ENCODE measurements at regions of chr2 and their contacts with region 1.

Region 1: DNA sequence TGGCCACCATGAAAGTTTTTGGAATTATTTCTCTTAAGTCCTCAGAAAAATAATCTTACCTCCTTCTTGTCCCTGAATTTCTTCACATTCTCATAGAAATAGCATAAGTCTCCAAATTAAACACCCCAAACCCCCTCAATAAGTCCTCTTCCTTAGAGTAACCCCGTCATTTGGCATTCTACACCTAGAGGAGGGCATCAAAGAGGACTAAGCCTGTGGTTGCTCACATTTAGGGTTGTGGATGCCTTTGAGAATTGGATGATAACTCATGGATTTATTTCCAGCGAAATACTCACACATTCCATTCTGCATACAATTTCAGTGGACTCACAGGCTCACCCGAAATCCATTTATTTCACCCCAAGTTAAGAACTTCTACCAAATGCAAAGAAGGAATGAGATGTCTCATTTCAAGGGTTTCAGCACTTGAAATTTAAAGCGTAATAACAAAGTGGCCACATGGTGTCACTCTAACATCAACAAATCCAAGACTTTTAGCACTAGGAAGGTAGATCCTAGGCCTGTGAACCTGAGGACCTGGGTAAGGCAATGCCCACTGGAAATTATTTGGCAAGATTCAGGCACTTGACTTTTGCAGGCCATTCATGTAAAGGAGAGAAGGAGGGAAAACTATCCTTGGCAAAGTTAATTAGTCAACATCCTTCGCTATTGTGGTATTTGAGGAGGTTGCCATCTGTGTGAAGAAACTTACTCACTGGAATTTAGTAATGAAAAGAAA is 24.6 kb downstream of the DYTN start:
- DNase-seq: peak in 7 of 9 donors; percentile 11 to 56 (median 41)
- ATAC-seq: peak; percentile 75
- H3K4me3 ChIP-seq: no peak overlapping the region
- H3K4me3 Mint-ChIP-seq: no peak overlapping the region
- H3K27ac ChIP-seq: no peak overlapping the region
- H3K27ac Mint-ChIP-seq: no peak overlapping the region
- H3K4me1 ChIP-seq: no peaks in the 10 kb centered on the region
- H3K4me1 Mint-ChIP-seq: peaks cover 0 to 4% (median 0%) of the 10 kb centered on the region in 7 donors
- H3K27me3 ChIP-seq: no peaks in the 10 kb centered on the region
- H3K27me3 Mint-ChIP-seq: peaks cover 0 to 7% (median 0%) of the 10 kb centered on the region in 5 donors

Region 2: DNA sequence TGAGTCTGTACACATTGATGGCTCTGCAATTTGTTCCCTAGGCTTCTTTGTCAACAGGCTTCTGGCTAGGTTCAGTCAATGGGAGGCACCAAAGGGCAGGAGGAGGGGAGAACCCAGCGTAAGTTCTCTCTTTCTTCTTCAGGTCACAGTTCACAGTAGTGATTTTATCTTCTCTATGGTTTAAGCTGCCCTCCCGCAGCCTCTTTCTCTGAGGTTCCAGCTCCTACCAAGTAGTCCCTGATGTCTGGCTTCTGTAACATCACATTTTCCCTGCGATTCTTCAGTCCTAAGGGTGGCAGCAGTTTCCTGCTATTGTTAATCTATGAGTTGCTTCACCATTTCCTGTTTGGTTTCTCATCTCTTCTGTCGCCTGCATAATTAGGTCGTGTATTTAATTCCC is 353.2 kb after region 1 on chr2:
- CTCF ChIA-PET with region 1: no interaction called
- POLR2A ChIA-PET with region 1: no interaction called
- intact Hi-C with region 1: loop called (anchors 2 to 5 kb)
- DNase-seq: peak in 8 of 9 donors; percentile 24 to 69 (median 52)
- ATAC-seq: peak; percentile 79
- H3K4me3 ChIP-seq: no peak overlapping the region
- H3K4me3 Mint-ChIP-seq: peak overlapping the region in 8 of 10 donors; percentile 0 to 66 (median 12)
- H3K27ac ChIP-seq: no peak overlapping the region
- H3K27ac Mint-ChIP-seq: peak overlapping the region; percentile 2 to 78 (median 56)
- H3K4me1 ChIP-seq: peaks cover 0 to 4% of the 10 kb centered on the region in 2 donors
- H3K4me1 Mint-ChIP-seq: peaks cover 11 to 14% (median 13%) of the 10 kb centered on the region in 7 donors
- H3K27me3 ChIP-seq: no peaks in the 10 kb centered on the region
- H3K27me3 Mint-ChIP-seq: peaks cover 0 to 16% (median 0%) of the 10 kb centered on the region in 5 donors

Region 3: DNA sequence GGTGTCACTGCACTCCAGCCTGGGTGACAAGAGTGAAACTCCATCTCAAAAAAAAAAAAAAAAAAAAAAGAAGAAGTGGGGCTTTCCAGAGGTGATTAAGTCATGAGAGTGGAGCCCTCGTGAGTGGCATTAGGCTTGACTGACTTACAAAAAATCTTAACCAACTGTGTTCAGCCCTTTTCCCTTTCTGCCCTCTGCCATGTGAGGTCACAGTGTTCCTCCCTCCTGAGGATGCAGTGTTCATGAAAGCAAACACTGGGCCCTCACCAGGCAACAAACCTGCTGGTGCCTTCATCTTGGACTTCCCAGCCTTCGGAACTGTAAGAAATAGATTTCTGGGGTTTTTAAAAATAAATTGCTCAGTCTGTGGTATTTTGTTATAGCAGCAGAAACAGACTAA is 968.6 kb after region 1 on chr2:
- CTCF ChIA-PET with region 1: no interaction called
- POLR2A ChIA-PET with region 1: no interaction called
- intact Hi-C with region 1: no loop called
- DNase-seq: no peak
- ATAC-seq: peak; percentile 93
- H3K4me3 ChIP-seq: no peak overlapping the region
- H3K4me3 Mint-ChIP-seq: no peak overlapping the region
- H3K27ac ChIP-seq: no peak overlapping the region
- H3K27ac Mint-ChIP-seq: no peak overlapping the region
- H3K4me1 ChIP-seq: no peaks in the 10 kb centered on the region
- H3K4me1 Mint-ChIP-seq: no peaks in the 10 kb centered on the region
- H3K27me3 ChIP-seq: no peaks in the 10 kb centered on the region
- H3K27me3 Mint-ChIP-seq: no peaks in the 10 kb centered on the region

Region 4: DNA sequence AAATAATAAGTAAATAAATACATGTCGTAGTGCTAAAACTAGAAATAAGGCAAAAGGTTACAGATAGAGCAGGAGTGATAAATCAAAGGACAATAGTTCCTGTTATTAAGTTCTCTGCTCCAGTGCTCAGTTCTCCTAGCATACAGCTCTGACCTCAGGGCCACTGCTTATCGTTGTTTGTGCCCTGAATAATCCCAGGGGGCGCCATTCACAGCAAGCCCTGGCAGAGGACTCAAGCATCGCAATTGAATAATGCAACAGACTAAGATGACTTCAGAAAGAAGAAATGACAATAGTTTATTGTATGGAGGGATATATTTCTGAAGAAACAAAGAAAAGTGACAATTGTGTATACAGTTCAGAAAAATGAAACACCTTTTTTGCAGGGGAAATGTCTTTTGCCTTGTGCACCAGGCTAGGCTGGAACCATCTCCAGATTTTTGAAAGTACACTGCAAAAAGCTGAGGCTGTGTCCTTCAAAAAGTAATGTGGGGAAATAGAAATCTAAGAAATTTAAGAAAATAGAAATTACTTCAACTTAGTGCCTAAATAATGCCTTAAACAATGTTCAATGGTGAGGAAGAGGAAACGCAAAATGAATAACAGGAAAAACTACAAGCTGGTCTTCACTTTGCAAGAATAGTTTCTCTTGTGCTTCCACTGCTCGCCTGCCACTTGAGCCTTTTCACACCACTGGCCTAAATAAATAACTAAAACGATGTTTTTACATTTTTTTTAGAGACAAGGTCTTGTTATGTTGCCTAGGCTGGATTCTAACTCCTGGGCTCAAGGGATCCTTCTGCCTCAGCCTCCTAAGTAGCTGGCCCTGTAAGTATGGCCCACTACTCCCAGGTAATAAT is 998.9 kb after region 1 on chr2:
- CTCF ChIA-PET with region 1: no interaction called
- POLR2A ChIA-PET with region 1: no interaction called
- intact Hi-C with region 1: loop called in 1 of 2 experiments (anchors 2 kb)
- DNase-seq: peak in 8 of 9 donors; percentile 21 to 58 (median 41)
- ATAC-seq: peak; percentile 82
- H3K4me3 ChIP-seq: no peak overlapping the region
- H3K4me3 Mint-ChIP-seq: peak overlapping the region in 2 of 10 donors; percentile 35 to 56
- H3K27ac ChIP-seq: no peak overlapping the region
- H3K27ac Mint-ChIP-seq: no peak overlapping the region
- H3K4me1 ChIP-seq: no peaks in the 10 kb centered on the region
- H3K4me1 Mint-ChIP-seq: peaks cover 0 to 6% (median 5%) of the 10 kb centered on the region in 7 donors
- H3K27me3 ChIP-seq: no peaks in the 10 kb centered on the region
- H3K27me3 Mint-ChIP-seq: peaks cover 0 to 5% (median 0%) of the 10 kb centered on the region in 5 donors

Region 5: DNA sequence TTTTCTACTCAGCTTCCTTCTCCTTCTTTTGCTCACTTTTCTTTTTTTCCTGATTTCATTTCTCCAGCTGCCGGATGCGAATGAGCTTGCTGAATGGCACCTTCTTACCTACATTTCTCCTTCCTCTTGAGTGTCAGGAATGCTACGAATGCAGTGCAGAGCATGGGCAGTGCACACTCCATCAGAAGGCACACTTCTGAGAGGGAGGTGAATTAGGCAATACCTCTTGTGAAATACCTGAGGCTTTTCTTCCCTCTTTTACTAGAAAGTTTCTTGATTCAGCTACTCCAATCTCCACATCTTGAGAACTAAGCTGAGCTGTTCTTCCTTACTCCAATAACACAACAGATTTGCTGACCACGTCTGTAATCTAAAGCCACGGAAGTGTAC is 1280.6 kb after region 1 on chr2:
- CTCF ChIA-PET with region 1: no interaction called
- POLR2A ChIA-PET with region 1: no interaction called
- intact Hi-C with region 1: loop called in 1 of 2 experiments (anchors 10 kb)
- DNase-seq: no peak
- ATAC-seq: peak; percentile 34
- H3K4me3 ChIP-seq: no peak overlapping the region
- H3K4me3 Mint-ChIP-seq: no peak overlapping the region
- H3K27ac ChIP-seq: no peak overlapping the region
- H3K27ac Mint-ChIP-seq: peak overlapping the region in 2 of 9 donors; percentile 2 to 65
- H3K4me1 ChIP-seq: no peaks in the 10 kb centered on the region
- H3K4me1 Mint-ChIP-seq: peaks cover 5 to 43% (median 31%) of the 10 kb centered on the region in 7 donors
- H3K27me3 ChIP-seq: no peaks in the 10 kb centered on the region
- H3K27me3 Mint-ChIP-seq: no peaks in the 10 kb centered on the region

Region 6: GRCh38 chr2:208072250-208072892 is 1378.8 kb after region 1 on chr2:
- CTCF ChIA-PET with region 1: interaction called, 4 read pairs
- POLR2A ChIA-PET with region 1: no interaction called
- intact Hi-C with region 1: loop called (anchors 1 to 5 kb)
- DNase-seq: peak; percentile 15 to 62 (median 38)
- ATAC-seq: peak; percentile 78
- H3K4me3 ChIP-seq: no peak overlapping the region
- H3K4me3 Mint-ChIP-seq: no peak overlapping the region
- H3K27ac ChIP-seq: no peak overlapping the region
- H3K27ac Mint-ChIP-seq: no peak overlapping the region
- H3K4me1 ChIP-seq: no peaks in the 10 kb centered on the region
- H3K4me1 Mint-ChIP-seq: no peaks in the 10 kb centered on the region
- H3K27me3 ChIP-seq: peaks cover 0 to 3% of the 10 kb centered on the region in 2 donors
- H3K27me3 Mint-ChIP-seq: peaks cover 5 to 17% (median 10%) of the 10 kb centered on the region in 5 donors